OCI-LY7 (cell line): ENCODE measurements at regions of chr18 and their contacts with region 1.

Region 1: GRCh38 chr18:12049978-12050811 is 43.4 kb upstream of the ANKRD62 start:
- DNase-seq: peak; percentile 79
- H3K4me3 ChIP-seq: peak overlapping the region; percentile 47
- H3K27ac ChIP-seq: peak overlapping the region; percentile 82
- H3K4me1 ChIP-seq: peaks cover 60% of the 10 kb centered on the region
- CTCF ChIP-seq: no peak

Region 2: GRCh38 chr18:11851146-11851805 is 198.9 kb before region 1 on chr18 and contains the start of gene CHMP1B:
- CTCF ChIA-PET with region 1: no interaction called
- POLR2A ChIA-PET with region 1: interaction called, 4 read pairs
- intact Hi-C with region 1: loop called (anchors 5 kb)
- DNase-seq: peak; percentile 97
- H3K4me3 ChIP-seq: peak within 1 kb of the TSS; percentile 90
- H3K27ac ChIP-seq: peak within 1 kb of the TSS; percentile 35
- H3K4me1 ChIP-seq: peaks cover 25% of the 10 kb centered on the region
- CTCF ChIP-seq: no peak
- total RNA-seq, gene CHMP1B: 29.3 and 31.5 TPM in 2 replicates

Region 3: GRCh38 chr18:12060182-12060870 is 10.1 kb after region 1 on chr18:
- CTCF ChIA-PET with region 1: interaction called, 3 read pairs
- POLR2A ChIA-PET with region 1: interaction called, 12 read pairs
- intact Hi-C with region 1: no loop called
- DNase-seq: peak; percentile 52
- H3K4me3 ChIP-seq: peak overlapping the region; percentile 75
- H3K27ac ChIP-seq: peak overlapping the region; percentile 45
- H3K4me1 ChIP-seq: peaks cover 24% of the 10 kb centered on the region
- CTCF ChIP-seq: 0 out of 2 replicates have a peak, but pooled peaks have one; percentile 11

Region 4: DNA sequence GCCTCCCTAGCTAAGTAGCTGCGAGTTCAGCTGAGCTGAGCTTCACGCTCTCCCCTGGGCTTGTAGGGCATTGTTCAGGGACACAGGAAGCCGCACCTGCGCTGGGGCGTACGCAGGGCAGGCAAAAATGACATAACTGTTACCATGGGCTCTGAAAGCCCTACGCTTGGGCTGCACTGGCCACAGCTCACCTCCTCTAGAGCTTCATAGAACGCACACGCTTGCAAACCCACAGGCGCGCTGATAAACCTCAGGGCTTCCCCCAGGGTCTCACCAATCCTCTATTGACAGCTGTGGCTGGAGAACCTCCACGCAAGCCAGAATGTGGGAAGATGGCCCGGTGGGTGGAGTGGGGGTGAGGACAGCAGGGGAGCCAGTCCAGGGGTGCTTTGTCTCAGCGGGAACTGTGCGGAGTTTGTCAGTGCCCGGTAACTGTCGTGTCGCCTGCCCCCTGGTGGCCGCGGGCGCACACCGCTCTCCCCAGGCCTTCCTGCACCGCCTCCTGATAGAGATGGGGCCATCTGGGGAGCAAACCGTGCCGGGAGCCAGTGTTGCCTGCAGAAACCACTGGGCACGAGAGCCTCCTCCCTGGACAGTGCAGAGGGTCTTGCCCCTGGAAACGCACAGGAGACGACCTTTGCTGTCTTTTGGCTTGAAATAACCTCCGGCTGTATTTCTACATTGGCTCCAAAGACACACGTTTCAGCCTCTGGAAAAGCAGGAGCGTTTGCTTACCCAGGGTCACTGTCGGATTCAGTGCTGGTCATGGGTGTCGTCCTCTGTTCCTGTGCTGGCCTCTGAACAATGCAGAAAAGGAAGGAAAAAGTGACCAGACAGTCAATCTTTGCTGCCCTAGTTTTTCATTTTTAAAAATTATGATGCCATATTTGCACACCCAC is 187.0 kb after region 1 on chr18:
- CTCF ChIA-PET with region 1: no interaction called
- POLR2A ChIA-PET with region 1: no interaction called
- intact Hi-C with region 1: loop called (anchors 10 kb)
- DNase-seq: peak; percentile 51
- H3K4me3 ChIP-seq: no peak overlapping the region
- H3K27ac ChIP-seq: no peak overlapping the region
- H3K4me1 ChIP-seq: no peaks in the 10 kb centered on the region
- CTCF ChIP-seq: peak; percentile 90